ENCODE measurements at regions of chr9 and their contacts with region 1.

Region 1: DNA sequence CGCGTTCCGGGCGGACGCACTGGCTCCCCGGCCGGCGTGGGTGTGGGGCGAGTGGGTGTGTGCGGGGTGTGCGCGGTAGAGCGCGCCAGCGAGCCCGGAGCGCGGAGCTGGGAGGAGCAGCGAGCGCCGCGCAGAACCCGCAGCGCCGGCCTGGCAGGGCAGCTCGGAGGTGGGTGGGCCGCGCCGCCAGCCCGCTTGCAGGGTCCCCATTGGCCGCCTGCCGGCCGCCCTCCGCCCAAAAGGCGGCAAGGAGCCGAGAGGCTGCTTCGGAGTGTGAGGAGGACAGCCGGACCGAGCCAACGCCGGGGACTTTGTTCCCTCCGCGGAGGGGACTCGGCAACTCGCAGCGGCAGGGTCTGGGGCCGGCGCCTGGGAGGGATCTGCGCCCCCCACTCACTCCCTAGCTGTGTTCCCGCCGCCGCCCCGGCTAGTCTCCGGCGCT is at the start of gene DAPK1:
- DNase-seq: peak; percentile 84
- ATAC-seq: peak; percentile 89
- total RNA-seq, gene DAPK1: 6.3 TPM

Region 2: DNA sequence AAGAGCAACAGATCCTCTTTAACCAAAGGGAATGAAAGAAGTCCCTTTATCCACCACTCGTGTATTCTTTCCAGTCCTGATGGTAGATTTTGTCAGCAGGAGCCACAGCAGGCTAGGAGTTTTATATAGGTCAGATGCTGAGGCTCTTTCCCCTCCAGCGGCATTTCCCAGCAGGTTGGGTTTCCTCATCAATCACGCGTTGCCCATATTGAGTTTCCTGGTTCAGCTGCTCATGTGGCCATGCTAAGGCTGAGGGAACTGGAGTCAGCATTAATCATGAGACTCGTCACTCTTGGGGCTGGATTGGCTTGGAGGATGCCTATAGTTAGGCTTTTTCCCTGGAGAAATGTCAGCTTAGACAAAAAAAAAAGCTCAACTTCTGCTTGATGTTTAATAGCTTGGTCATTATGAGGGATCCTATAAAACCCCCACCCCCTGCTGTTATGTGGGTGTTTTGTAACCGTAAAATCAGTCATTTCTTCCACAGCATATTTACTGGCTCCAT is 357.0 kb before region 1 on chr9:
- intact Hi-C with region 1: no loop called
- DNase-seq: no peak
- ATAC-seq: no peak

Region 3: DNA sequence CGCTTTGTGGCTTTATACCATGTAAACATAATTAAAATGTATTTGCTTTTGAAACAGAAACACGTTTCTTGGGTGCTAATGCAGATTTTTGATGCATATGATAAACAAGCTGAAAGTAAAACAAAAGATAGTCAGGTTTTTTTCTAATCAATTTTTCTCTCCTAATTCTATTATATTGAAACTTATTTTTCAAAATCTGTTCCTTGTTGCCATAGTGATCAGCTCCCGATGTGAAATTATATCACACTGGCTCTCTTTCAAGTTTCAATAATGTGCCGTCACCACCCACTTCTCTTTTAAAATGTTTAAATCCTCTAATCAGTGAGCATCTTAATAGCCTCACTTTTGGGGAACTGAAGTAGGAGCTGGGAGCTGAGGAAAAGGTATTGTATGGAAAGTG is 36.4 kb before region 1 on chr9:
- intact Hi-C with region 1: no loop called
- DNase-seq: no peak
- ATAC-seq: no peak

Region 4: GRCh38 chr9:87599901-87600610 is 102.4 kb after region 1 on chr9:
- intact Hi-C with region 1: loop called (anchors 5 kb)
- DNase-seq: no peak
- ATAC-seq: peak; percentile 13

Region 5: DNA sequence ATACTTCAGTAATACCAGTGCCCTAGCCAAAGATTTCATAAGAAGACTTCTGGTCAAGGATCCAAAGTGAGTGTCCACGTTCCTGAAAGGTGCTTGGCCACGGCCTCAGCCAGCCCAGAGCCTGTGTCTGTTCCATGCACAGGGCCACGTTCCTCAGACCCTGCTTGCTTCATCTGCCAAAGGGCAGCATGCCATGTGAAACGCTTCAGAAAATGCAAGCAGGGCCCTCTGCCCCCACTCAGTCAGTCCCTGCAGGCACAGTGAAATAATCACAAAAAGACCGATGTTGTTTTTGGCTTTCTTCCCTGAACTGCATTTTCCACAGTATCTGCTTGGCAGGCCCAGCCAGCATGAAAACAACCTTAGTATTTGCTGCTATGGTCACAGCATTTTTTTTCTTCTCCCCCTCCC is 142.8 kb after region 1 on chr9:
- intact Hi-C with region 1: loop called (anchors 10 kb)
- DNase-seq: no peak
- ATAC-seq: peak; percentile 29

Measured in Right ventricle myocardium inferior (tissue), 1 donor.